Head of caudate nucleus (tissue), 42 donors: ENCODE measurements at regions of chr12 and their contacts with region 1.

Region 1: DNA sequence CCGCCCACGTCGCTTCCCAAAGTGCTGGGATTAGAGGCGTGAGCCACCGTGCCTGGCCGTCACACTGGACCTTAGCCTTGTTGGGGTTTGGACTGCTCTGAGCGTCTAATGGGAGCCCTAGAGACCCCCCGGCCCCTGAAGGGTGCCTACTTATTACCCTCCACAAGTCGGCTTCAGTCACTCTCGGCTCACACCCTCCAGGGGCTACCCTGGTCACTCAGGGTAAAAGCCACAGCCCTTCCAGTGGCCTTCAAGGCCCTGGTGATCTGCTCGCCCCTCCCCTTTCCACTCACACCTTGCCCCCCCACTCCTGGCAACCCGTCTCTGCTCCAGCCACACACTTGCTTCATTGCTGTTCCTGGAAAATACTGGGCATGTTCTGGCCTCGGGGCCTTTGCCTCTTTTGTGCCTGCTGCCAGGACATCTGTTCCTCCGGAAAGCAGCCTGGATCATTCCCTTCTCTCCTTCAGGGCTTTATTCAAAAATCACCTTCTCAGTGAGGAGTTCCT is 3.6 kb upstream of the MORN3 start:
- DNase-seq: peak in 2 of 42 donors; percentile 9 to 26

Region 2: GRCh38 chr12:121550974-121551634 is 122.0 kb before region 1 on chr12:
- intact Hi-C with region 1: loop called (anchors 10 kb)
- DNase-seq: no peak